Activated naive CD4-positive, alpha-beta T cell treated with anti-CD3 and anti-CD28 coated beads for 36 hours (primary cell): ENCODE measurements at regions of chr12 and their contacts with region 1.

Region 1: GRCh38 chr12:122265931-122266771 is at the start of gene VPS33A:
- DNase-seq: peak; percentile 95
- H3K4me3 Mint-ChIP-seq: peak within 1 kb of the TSS; percentile 94
- H3K27ac Mint-ChIP-seq: peak within 1 kb of the TSS; percentile 96
- H3K4me1 Mint-ChIP-seq: peaks cover 23% of the 10 kb centered on the region
- H3K27me3 Mint-ChIP-seq: peaks cover 3% of the 10 kb centered on the region
- total RNA-seq, gene VPS33A: 15.9 to 17.2 TPM

Region 2: DNA sequence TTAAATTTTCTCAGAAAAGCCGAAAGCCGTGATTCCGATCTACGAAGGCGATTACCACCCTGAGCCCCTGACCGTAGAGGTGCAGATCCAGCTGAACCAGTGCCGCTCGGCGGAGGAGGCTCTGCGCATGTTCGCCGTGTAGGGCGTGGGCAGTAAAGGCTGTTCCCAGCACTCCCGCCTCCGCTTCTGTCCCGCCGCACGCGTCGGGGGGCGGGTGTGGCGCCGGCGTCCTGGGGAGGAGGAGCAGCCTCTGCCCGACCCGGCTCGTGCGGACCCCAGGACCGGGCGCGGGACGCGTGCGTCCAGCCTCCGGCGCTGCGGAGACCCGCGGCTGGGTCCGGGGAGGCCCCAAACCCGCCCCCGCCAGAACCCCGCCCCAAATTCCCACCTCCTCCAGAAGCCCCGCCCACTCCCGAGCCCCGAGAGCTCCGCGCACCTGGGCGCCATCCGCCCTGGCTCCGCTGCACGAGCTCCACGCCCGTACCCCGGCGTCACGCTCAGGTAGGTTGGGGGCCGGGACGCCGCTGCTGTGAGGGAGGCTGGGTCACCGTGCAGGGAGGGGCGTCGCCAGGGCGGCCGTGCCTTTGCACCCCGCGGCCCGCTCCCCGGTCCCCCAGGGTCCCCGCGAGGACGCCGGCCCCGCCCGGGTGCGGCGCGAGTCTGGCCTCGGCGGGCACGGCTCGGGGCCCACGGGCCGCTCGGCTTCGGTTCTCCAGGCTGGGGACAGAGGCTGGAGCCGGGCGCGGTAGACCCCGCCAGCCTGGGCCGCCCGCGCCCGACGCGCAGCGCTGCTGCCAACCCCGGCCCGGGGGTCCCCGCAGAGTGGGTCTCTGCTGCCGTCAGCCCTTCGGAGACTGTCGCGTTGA is 62.6 kb before region 1 on chr12 and contains the start of gene B3GNT4:
- CTCF ChIA-PET with region 1: no interaction called
- intact Hi-C with region 1: loop called (anchors 5 kb)
- DNase-seq: peak; percentile 68
- H3K4me3 Mint-ChIP-seq: peak within 1 kb of the TSS; percentile 73
- H3K27ac Mint-ChIP-seq: no peak within 1 kb of the TSS
- H3K4me1 Mint-ChIP-seq: peaks cover 15% of the 10 kb centered on the region
- H3K27me3 Mint-ChIP-seq: peaks cover 10% of the 10 kb centered on the region
- total RNA-seq, gene B3GNT4: 0.43 to 0.67 TPM

Region 3: DNA sequence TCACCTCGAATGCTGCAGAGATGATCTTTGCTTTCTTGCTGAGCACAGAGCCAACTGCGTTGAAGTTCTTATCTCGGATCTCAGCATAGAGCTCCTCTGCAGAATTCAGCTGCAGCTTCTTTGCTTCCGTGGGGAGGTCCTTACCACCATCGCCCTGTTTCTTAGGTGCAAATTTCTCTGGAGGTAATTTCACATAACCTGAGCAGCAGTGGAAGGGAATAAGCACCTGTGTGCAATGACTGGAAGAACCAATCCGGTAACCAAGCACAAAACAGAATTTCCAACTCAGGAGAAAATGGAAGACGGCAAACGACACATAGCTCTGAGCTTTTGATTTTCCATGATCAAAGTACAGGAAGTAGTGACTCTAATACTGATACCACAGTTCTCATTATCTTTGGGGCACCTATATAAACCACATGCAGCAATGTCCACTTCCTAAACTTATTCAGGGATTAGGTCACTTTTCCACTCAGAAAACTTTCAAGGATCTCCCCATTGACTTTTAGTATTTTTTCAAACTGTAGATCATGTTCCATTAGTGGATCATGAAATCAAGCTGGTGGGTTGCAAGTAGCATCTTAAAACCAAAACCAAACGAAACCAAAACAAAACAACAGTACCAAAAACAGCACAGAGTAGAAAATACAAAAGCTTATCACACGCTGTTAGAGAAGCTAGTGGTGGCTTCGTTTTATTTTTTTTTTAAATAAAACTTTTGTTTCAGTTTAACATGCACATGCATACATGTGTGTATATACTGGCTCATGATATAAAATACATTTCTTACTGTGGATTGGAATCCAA is 21.4 kb before region 1 on chr12:
- CTCF ChIA-PET with region 1: interaction called, 7 read pairs
- intact Hi-C with region 1: loop called (anchors 1 kb)
- DNase-seq: no peak
- H3K4me3 Mint-ChIP-seq: peak overlapping the region; percentile 50
- H3K27ac Mint-ChIP-seq: peak overlapping the region; percentile 59
- H3K4me1 Mint-ChIP-seq: peaks cover 29% of the 10 kb centered on the region
- H3K27me3 Mint-ChIP-seq: no peaks in the 10 kb centered on the region